Vagina (tissue), 2 donors: ENCODE measurements at regions of chr9 and their contacts with region 1.

Region 1: GRCh38 chr9:19048966-19049916 is at the start of gene RRAGA:
- DNase-seq: peak in 1 of 2 donors; percentile 95
- H3K4me3 ChIP-seq: peak within 1 kb of the TSS; percentile 83 to 96
- H3K27ac ChIP-seq: peak within 1 kb of the TSS; percentile 95
- H3K4me1 ChIP-seq: peaks cover 39% of the 10 kb centered on the region
- H3K27me3 ChIP-seq: no peaks in the 10 kb centered on the region
- CTCF ChIP-seq: peak; percentile 88 to 96 (median 88)
- POLR2A ChIP-seq: peak in 1 of 2 donors; percentile 75
- total RNA-seq, gene RRAGA: 68.0 TPM

Region 2: DNA sequence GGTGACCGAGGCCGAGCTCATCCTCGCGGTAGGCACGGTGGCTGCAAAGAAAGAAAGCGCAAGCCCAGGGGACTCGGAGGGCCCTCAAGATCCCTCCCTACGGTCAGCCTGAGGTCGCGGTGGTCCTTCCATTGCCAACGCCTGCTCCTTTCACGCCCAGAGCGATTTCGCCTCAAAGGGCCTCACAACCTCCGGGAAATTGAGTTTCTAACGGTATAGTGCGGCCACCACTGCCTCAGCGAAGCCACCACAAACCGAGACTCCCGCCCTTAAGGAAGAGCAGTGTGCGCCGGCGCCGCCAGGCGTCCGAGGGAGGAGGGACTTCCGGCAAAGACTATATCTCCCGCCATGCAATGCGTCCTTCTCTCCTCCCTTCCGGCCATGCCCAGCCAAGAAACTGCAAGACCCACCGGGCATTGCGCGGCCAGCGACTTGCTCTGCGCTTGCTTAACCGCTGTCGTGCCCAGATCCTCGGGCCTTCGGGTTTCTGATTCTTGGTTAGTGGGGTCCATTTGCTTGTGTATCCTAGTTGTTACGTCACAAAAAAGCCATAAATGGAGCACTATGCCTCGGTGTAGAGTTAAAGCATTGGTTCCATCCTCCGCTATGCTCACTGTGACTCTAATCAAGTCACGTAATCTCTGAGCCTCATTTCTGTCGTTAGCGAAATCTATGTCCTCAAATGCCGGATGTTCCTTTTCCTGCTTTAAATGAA is 53.5 kb after region 1 on chr9 and contains the start of gene HAUS6:
- intact Hi-C with region 1: loop called (anchors 2 kb)
- DNase-seq: peak; percentile 97 to 99
- H3K4me3 ChIP-seq: peak within 1 kb of the TSS; percentile 55 to 91
- H3K27ac ChIP-seq: peak within 1 kb of the TSS; percentile 83
- H3K4me1 ChIP-seq: peaks cover 36% of the 10 kb centered on the region
- H3K27me3 ChIP-seq: no peaks in the 10 kb centered on the region
- CTCF ChIP-seq: peak in 2 of 3 experiments; percentile 25 to 83
- POLR2A ChIP-seq: peak in 1 of 2 donors; percentile 71
- total RNA-seq, gene HAUS6: 7.1 TPM

Region 3: DNA sequence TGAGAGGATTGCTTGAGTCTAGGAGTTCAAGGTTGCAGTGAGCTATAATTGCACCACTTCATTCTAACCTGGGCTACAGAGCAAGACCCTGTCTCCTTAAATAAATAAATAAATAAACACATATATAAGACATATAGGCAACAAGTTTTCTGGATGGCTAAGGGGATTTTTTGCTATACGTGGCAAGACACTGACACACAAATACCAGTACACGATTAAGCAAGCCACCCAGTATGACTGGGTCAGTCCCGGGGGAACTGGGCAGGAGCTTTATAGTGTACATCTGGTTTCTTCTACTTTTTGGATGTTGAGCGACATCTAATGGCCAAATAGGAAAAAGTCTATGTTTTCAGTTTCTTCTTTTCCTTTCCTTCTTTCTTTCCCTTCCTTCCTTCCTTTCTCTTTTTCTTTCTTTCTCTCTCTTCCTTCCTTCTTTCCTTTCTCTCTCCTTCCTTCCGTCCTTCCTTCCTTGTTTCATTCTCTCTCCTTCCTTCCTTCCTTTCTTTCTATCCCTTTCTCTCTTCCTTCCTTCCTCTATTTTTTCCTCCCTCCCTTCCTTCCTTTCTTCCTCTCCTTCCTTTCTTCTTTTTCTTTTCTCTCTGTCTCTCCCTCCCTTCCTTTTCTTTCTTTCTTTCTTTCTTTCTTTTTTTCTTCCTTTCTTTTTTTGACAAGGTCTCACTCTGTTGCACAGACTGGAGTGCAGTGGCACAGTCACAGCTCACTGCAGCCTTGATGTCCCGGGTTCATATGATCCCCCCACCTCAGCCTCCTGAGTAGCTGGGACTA is 125.1 kb after region 1 on chr9:
- intact Hi-C with region 1: loop called (anchors 10 kb)
- DNase-seq: no peak
- H3K4me3 ChIP-seq: no peak overlapping the region
- H3K27ac ChIP-seq: peak overlapping the region; percentile 19
- H3K4me1 ChIP-seq: no peaks in the 10 kb centered on the region
- H3K27me3 ChIP-seq: no peaks in the 10 kb centered on the region
- CTCF ChIP-seq: peak; percentile 15 to 65 (median 50)
- POLR2A ChIP-seq: no peak